ENCODE measurements at regions of chr6 and their contacts with region 1.

Region 1: DNA sequence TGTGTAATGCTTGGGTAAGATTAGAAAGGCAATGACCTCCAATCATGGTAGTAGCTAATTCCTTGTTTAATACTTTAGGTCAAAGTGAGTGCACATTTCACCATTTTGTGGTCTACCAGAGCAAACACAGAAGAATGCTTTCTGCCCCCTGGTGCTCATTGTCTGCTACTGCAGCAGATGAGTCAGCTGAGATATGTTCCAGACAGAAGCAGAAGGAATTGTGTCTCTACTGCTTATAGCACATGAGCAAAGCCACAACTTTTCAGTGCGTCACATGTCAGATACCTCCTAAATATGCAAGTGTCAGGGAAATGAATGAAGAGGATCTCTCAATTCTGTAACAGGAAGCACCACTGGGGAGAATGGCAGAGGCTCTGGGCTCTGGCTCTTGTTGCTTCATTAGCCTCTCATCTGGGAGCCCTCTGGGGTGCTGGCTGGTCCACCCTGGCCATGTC is 308.9 kb downstream of the ALDH8A1 start:
- DNase-seq: peak; percentile 62 to 86
- ATAC-seq: peak; percentile 73 to 92 (median 88)
- H3K4me3 ChIP-seq: no peak overlapping the region
- H3K27ac ChIP-seq: peak overlapping the region in 5 of 10 donors; percentile 3 to 61 (median 6)
- H3K4me1 ChIP-seq: peaks cover 0 to 28% (median 9%) of the 10 kb centered on the region in 9 donors
- H3K27me3 ChIP-seq: no peaks in the 10 kb centered on the region
- CTCF ChIP-seq: peak; percentile 81 to 98 (median 96)

Region 2: GRCh38 chr6:134182528-134182927 is 458.5 kb before region 1 on chr6:
- intact Hi-C with region 1: loop called in 4 of 10 experiments (anchors 1 to 5 kb)
- DNase-seq: no peak
- ATAC-seq: no peak
- H3K4me3 ChIP-seq: no peak overlapping the region
- H3K27ac ChIP-seq: no peak overlapping the region
- H3K4me1 ChIP-seq: peaks cover 0 to 19% (median 7%) of the 10 kb centered on the region in 9 donors
- H3K27me3 ChIP-seq: no peaks in the 10 kb centered on the region
- CTCF ChIP-seq: no peak

Region 3: GRCh38 chr6:134416418-134417154 is 224.4 kb before region 1 on chr6:
- intact Hi-C with region 1: loop called in 1 of 10 experiments (anchors 10 kb)
- DNase-seq: no peak
- ATAC-seq: no peak
- H3K4me3 ChIP-seq: no peak overlapping the region
- H3K27ac ChIP-seq: peak overlapping the region in 1 of 10 donors; percentile 24
- H3K4me1 ChIP-seq: peaks cover 0 to 49% (median 8%) of the 10 kb centered on the region in 9 donors
- H3K27me3 ChIP-seq: no peaks in the 10 kb centered on the region
- CTCF ChIP-seq: no peak

Region 4: DNA sequence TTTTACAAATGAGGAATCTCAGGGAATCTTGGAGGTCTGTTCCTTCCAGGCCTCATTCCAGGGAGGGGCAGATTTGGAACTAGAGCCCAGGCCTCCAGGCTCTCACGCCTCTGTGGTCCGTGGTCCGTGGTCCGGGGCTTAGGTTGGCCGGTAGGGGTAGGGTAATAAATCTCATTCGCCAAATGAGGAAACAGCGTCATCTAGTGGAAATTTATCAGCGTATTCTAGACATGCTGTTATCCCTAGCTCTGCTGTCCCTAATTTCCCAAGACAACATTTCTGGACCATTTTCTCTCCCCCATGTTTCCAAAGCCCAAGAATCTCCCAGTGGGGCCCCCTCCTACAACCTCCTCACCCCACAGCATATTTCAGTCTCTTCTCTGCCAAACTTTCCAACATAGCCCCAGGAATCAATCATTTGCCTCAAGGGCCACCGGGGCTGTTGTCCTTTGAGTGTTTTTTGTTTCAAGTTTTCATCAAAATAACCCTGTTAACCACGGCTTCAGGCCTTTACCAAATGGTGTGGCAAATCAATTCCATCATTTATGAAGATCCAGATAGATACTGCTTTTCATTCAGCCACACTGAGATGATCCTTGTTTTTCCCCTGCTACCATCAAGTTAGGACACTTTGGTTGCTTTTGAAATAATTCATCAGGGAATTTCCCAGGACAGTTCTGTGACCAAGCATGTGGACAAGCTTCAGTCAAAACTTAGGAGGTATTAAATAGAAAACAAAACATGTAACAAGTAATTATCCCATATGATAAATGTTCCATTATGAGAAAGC is 182.1 kb after region 1 on chr6:
- intact Hi-C with region 1: loop called in 8 of 10 experiments (anchors 2 to 10 kb)
- DNase-seq: peak in 1 of 2 donors; percentile 74
- ATAC-seq: peak; percentile 88 to 96 (median 90)
- H3K4me3 ChIP-seq: no peak overlapping the region
- H3K27ac ChIP-seq: no peak overlapping the region
- H3K4me1 ChIP-seq: peaks cover 0 to 25% (median 12%) of the 10 kb centered on the region in 9 donors
- H3K27me3 ChIP-seq: no peaks in the 10 kb centered on the region
- CTCF ChIP-seq: peak; percentile 78 to 93 (median 88)

Region 5: DNA sequence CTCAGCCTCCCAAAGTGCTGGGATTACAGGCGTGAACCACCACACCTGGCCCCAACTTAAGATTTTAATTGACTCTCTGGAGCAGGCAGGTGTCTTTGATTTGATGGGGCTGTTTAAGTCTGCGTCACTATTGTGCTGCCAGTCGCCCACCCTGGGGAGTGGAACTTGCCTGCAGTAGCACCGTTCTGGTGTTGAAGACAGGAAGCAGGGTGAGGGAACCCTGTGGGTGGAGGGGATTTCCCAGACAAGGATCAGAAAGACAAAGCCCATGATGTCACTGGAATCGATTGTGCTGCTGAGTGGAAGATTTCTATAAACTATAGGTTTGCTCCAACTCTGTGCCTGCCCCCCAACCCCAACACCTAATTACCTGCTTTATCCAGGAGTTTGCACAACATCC is 297.9 kb after region 1 on chr6:
- intact Hi-C with region 1: loop called in 2 of 10 experiments (anchors 10 kb)
- DNase-seq: no peak
- ATAC-seq: no peak
- H3K4me3 ChIP-seq: no peak overlapping the region
- H3K27ac ChIP-seq: no peak overlapping the region
- H3K4me1 ChIP-seq: no peaks in the 10 kb centered on the region
- H3K27me3 ChIP-seq: no peaks in the 10 kb centered on the region
- CTCF ChIP-seq: no peak